Activated B cell treated with CpG ODN at 0.5 μM for 24 hours (primary cell): ENCODE measurements at regions of chr12 and their contacts with region 1.

Region 1: GRCh38 chr12:10613349-10614055 is at the start of gene MAGOHB:
- DNase-seq: peak; percentile 99
- ATAC-seq: peak; percentile 96
- H3K4me3 Mint-ChIP-seq: peak within 1 kb of the TSS; percentile 100
- H3K27ac Mint-ChIP-seq: peak within 1 kb of the TSS; percentile 100
- H3K4me1 Mint-ChIP-seq: peaks cover 29% of the 10 kb centered on the region
- H3K27me3 Mint-ChIP-seq: peaks cover 6% of the 10 kb centered on the region
- CTCF ChIP-seq: no peak
- total RNA-seq, gene MAGOHB: 25.0 and 28.8 TPM in 2 replicates

Region 2: GRCh38 chr12:10212201-10213131 is 401.0 kb before region 1 on chr12 and contains the start of gene GABARAPL1:
- CTCF ChIA-PET with region 1: no interaction called
- POLR2A ChIA-PET with region 1: no interaction called
- intact Hi-C with region 1: loop called (anchors 1 kb)
- DNase-seq: peak; percentile 59
- ATAC-seq: peak; percentile 74
- H3K4me3 Mint-ChIP-seq: peak within 1 kb of the TSS; percentile 91
- H3K27ac Mint-ChIP-seq: peak within 1 kb of the TSS; percentile 46
- H3K4me1 Mint-ChIP-seq: peaks cover 17% of the 10 kb centered on the region
- H3K27me3 Mint-ChIP-seq: peaks cover 19% of the 10 kb centered on the region
- CTCF ChIP-seq: no peak
- total RNA-seq, gene GABARAPL1: 2.1 and 2.5 TPM in 2 replicates

Region 3: DNA sequence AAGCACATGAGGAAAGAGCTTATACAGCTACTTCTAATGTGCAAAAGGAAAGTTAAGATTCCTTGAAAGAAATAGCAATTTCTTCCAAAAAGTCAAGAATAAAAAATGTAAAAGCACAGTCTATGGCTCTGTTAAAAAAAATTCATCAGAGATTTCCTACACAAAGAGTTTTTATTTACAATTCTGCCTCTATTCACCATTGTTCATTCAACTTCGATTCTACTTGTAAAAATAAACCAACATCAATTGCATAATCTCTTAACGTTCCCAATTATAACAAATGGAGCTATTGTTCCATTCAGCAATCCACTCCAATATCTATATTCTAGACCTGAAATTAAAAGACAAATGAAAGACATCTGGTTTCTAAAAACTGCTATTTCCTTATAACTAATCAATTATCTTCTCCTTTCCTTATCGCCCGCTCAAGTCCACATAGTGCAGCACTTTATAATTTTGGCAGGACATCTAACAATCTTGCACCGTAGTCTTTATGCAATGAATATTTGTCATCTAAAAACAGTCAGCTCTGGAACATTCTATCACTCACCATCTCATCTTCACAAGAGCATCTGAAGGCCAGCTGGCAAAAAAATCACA is 101.6 kb before region 1 on chr12:
- CTCF ChIA-PET with region 1: no interaction called
- POLR2A ChIA-PET with region 1: no interaction called
- intact Hi-C with region 1: no loop called
- DNase-seq: no peak
- ATAC-seq: no peak
- H3K4me3 Mint-ChIP-seq: no peak overlapping the region
- H3K27ac Mint-ChIP-seq: no peak overlapping the region
- H3K4me1 Mint-ChIP-seq: no peaks in the 10 kb centered on the region
- H3K27me3 Mint-ChIP-seq: peaks cover 3% of the 10 kb centered on the region
- CTCF ChIP-seq: no peak

Region 4: DNA sequence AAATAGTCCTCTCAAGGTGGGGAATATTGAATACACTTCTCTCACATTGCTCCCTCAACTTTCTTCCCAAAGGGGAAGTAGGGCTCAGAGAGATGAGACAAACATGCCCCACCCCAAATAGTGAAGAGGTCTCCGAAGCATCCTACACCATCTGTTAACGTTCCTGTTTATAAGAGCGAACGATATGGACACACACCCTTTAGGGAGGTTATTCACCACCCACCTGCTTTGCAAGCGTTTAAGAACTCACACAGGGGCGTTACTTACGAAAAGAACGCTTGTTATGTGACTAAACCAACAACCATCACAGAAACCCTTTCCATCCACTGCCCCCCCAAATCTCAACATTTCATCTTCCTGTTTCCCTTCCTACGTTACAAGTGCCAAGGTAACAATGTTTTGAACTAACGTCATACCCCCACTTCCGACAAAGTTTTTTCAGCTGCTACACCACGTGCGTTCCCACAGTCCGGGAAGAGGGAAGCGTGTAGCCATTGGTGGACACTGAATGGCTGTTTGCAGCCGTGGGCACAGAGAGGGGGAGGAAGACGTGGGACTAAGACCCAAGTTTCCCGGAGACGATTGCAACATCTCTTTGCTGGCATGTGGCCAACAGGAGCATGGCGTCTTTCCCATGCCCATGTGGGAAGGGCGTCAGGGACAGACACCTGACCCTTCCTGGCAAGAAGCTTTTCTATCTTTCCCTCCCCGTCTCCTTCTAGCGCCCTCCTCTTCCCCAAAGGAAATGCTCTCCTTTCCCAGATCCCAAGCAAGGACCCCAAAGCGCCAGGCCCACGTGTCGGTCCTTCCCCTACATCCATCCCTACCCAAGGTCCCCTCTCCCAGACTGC is 108.4 kb after region 1 on chr12:
- CTCF ChIA-PET with region 1: no interaction called
- POLR2A ChIA-PET with region 1: no interaction called
- intact Hi-C with region 1: loop called (anchors 1 kb)
- DNase-seq: peak; percentile 36
- ATAC-seq: peak; percentile 49
- H3K4me3 Mint-ChIP-seq: peak overlapping the region; percentile 88
- H3K27ac Mint-ChIP-seq: peak overlapping the region; percentile 91
- H3K4me1 Mint-ChIP-seq: peaks cover 33% of the 10 kb centered on the region
- H3K27me3 Mint-ChIP-seq: peaks cover 8% of the 10 kb centered on the region
- CTCF ChIP-seq: no peak

Region 5: DNA sequence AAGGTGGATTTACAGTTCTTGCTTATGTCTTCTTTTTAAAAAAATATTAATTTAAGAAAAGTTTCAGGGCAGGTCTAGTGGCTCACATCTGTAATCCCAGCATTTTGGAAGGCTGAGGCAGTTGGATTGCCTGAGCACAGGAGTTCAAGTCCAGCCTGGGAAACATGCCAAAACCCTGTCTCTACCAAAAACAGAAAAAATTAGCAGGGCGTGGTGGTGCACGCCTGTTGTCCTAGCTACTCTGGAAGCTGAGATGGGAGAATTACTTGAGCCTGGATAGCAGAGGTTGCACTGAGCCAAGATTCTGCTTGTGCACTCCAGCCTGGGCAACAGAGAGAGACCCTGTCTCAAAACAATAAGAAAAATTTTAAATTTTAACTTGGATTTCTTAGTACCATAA is 454.0 kb after region 1 on chr12:
- CTCF ChIA-PET with region 1: no interaction called
- POLR2A ChIA-PET with region 1: no interaction called
- intact Hi-C with region 1: no loop called
- DNase-seq: no peak
- ATAC-seq: no peak
- H3K4me3 Mint-ChIP-seq: no peak overlapping the region
- H3K27ac Mint-ChIP-seq: no peak overlapping the region
- H3K4me1 Mint-ChIP-seq: peaks cover 19% of the 10 kb centered on the region
- H3K27me3 Mint-ChIP-seq: no peaks in the 10 kb centered on the region
- CTCF ChIP-seq: no peak

Region 6: GRCh38 chr12:11171145-11171968 is 557.9 kb after region 1 on chr12 and contains the start of gene SMIM10L1:
- CTCF ChIA-PET with region 1: no interaction called
- POLR2A ChIA-PET with region 1: interaction called, 4 read pairs
- intact Hi-C with region 1: loop called (anchors 1 kb)
- DNase-seq: peak; percentile 75
- ATAC-seq: peak; percentile 96
- H3K4me3 Mint-ChIP-seq: peak within 1 kb of the TSS; percentile 97
- H3K27ac Mint-ChIP-seq: peak within 1 kb of the TSS; percentile 95
- H3K4me1 Mint-ChIP-seq: peaks cover 52% of the 10 kb centered on the region
- H3K27me3 Mint-ChIP-seq: no peaks in the 10 kb centered on the region
- CTCF ChIP-seq: no peak
- total RNA-seq, gene SMIM10L1: 7.3 and 8.8 TPM in 2 replicates